ENCODE measurements at regions of chr4 and their contacts with region 1.

Region 1: GRCh38 chr4:121900132-121900983 is 30.1 kb upstream of the BBS7 start:
- DNase-seq: peak; percentile 12
- ATAC-seq: peak; percentile 93
- H3K4me3 ChIP-seq: no peak overlapping the region
- H3K27ac ChIP-seq: no peak overlapping the region
- H3K4me1 ChIP-seq: no peaks in the 10 kb centered on the region
- H3K27me3 ChIP-seq: no peaks in the 10 kb centered on the region
- CTCF ChIP-seq: peak; percentile 67 to 85 (median 84)
- EP300 ChIP-seq: no peak
- POLR2A ChIP-seq: no peak
- RAD21 ChIP-seq: peak; percentile 99

Region 2: DNA sequence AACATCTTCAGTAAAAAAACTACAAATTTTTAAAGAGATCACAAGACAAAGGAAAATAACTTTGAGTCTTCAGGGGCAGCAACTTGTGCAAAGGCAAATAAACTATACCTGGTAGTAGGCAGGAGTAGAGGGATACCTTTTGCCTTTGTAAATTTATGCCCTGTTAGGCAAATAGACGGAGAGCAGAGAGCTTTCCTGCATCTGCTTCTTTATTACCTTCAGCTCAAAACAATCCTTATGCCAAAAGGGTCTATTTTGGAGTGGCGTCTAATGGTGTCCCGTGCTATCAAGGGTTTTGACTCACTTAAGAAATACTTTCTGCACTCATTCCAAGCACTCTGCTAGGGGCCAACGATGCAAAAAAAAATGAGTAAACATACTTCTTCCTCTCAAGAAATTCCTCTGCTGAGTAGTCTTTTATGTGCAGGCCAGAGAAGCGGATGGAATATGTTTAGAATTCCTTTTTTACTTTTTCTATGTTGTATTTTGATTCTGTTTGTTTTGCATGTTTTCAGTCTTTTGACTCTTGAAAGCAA is 335.4 kb before region 1 on chr4:
- CTCF ChIA-PET with region 1: no interaction called
- POLR2A ChIA-PET with region 1: no interaction called
- RAD21 ChIA-PET with region 1: no interaction called
- SMC1A ChIA-PET with region 1: no interaction called
- in situ Hi-C with region 1: no loop called
- intact Hi-C with region 1: no loop called
- DNase-seq: no peak
- ATAC-seq: no peak
- H3K4me3 ChIP-seq: no peak overlapping the region
- H3K27ac ChIP-seq: no peak overlapping the region
- H3K4me1 ChIP-seq: no peaks in the 10 kb centered on the region
- H3K27me3 ChIP-seq: no peaks in the 10 kb centered on the region; a peak in 1 of 4 replicates
- CTCF ChIP-seq: no peak
- EP300 ChIP-seq: no peak
- POLR2A ChIP-seq: no peak
- RAD21 ChIP-seq: no peak

Region 3: DNA sequence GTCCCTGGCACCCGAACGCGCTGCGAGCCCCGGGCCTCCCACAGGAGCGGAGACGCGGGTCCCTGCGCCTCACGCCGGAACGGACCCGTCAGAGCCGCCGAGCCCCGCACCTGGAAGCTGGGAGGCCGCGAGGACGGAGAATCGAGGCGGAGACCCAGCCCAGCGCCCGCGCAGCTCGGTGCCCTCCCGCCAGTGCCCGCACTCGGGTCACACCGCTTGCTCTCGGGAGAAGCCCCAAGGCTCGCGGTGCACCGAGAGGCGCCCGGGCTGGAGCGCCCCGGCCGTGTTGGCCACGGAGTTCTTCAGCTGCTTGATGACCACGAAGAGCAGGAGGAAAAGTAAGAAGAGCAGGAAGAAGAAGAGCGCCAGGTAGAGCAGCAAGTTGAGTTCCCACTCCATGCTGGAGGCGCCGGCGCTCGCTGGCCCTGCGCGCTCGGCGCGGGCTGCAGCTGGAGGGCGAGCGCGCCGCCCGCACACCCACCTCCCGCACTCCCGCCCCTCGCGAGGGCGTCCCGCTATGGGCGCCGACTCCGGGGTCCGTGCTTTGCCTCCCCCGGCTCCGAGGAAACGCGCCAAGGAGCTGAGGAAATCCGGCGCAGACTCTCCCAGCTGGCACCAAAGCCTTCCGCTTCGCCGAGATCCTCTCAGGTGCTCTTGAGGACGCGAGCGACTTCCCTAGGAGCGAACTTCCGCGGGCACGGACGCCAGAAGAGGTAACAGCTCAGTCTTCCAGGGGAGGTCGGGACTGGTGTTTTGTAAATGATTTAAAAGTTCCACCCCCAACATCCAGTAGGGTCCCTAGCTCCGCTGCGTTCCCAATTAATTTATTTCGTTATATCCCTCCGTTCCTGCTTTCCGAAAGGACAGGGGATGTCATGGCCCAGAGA is 135.4 kb before region 1 on chr4 and contains the start of gene SMIM43:
- CTCF ChIA-PET with region 1: no interaction called
- POLR2A ChIA-PET with region 1: no interaction called
- RAD21 ChIA-PET with region 1: no interaction called
- SMC1A ChIA-PET with region 1: no interaction called
- in situ Hi-C with region 1: no loop called
- intact Hi-C with region 1: no loop called
- DNase-seq: no peak
- ATAC-seq: peak; percentile 42
- H3K4me3 ChIP-seq: peak within 1 kb of the TSS; percentile 2; the same call in 1 of the 2 replicates
- H3K27ac ChIP-seq: no peak within 1 kb of the TSS
- H3K4me1 ChIP-seq: no peaks in the 10 kb centered on the region
- H3K27me3 ChIP-seq: peaks cover 1 to 5% of the 10 kb centered on the region in 2 experiments; a peak in 3 of 4 replicates
- CTCF ChIP-seq: no peak
- EP300 ChIP-seq: no peak
- POLR2A ChIP-seq: no peak
- RAD21 ChIP-seq: no peak
- polyA plus RNA-seq, gene SMIM43: not detected

Region 4: GRCh38 chr4:121869841-121870656 is 30.3 kb before region 1 on chr4 and contains the start of gene BBS7:
- CTCF ChIA-PET with region 1: interaction called, 10 read pairs
- POLR2A ChIA-PET with region 1: no interaction called
- RAD21 ChIA-PET with region 1: interaction called, 8 read pairs
- SMC1A ChIA-PET with region 1: interaction called, 3 read pairs
- in situ Hi-C with region 1: no loop called
- intact Hi-C with region 1: no loop called
- DNase-seq: peak; percentile 81
- ATAC-seq: peak; percentile 99
- H3K4me3 ChIP-seq: peak within 1 kb of the TSS; percentile 83
- H3K27ac ChIP-seq: peak within 1 kb of the TSS; percentile 42; the same call in 1 of the 2 replicates
- H3K4me1 ChIP-seq: no peaks in the 10 kb centered on the region
- H3K27me3 ChIP-seq: no peaks in the 10 kb centered on the region
- CTCF ChIP-seq: no peak
- EP300 ChIP-seq: no peak
- POLR2A ChIP-seq: peak; percentile 88
- RAD21 ChIP-seq: no peak
- polyA plus RNA-seq, gene BBS7: 7.4 to 8.8 TPM

Region 5: GRCh38 chr4:121885115-121885514 is 15.2 kb before region 1 on chr4:
- CTCF ChIA-PET with region 1: interaction called, 15 read pairs
- POLR2A ChIA-PET with region 1: no interaction called
- RAD21 ChIA-PET with region 1: interaction called, 4 read pairs
- SMC1A ChIA-PET with region 1: interaction called, 3 read pairs
- in situ Hi-C with region 1: no loop called
- intact Hi-C with region 1: no loop called
- DNase-seq: no peak
- ATAC-seq: no peak
- H3K4me3 ChIP-seq: no peak overlapping the region
- H3K27ac ChIP-seq: no peak overlapping the region
- H3K4me1 ChIP-seq: no peaks in the 10 kb centered on the region
- H3K27me3 ChIP-seq: no peaks in the 10 kb centered on the region
- CTCF ChIP-seq: no peak
- EP300 ChIP-seq: no peak
- POLR2A ChIP-seq: no peak
- RAD21 ChIP-seq: no peak

Region 6: GRCh38 chr4:121943941-121944340 is 43.6 kb after region 1 on chr4:
- CTCF ChIA-PET with region 1: interaction called, 16 read pairs
- POLR2A ChIA-PET with region 1: no interaction called
- RAD21 ChIA-PET with region 1: no interaction called
- SMC1A ChIA-PET with region 1: interaction called, 8 read pairs
- in situ Hi-C with region 1: no loop called
- intact Hi-C with region 1: no loop called
- DNase-seq: no peak
- ATAC-seq: peak; percentile 92
- H3K4me3 ChIP-seq: no peak overlapping the region
- H3K27ac ChIP-seq: no peak overlapping the region
- H3K4me1 ChIP-seq: no peaks in the 10 kb centered on the region
- H3K27me3 ChIP-seq: peaks cover 0 to 6% of the 10 kb centered on the region in 2 experiments; a peak in 2 of 4 replicates
- CTCF ChIP-seq: peak; percentile 37 to 72 (median 64); a peak in 5 of 6 replicates
- EP300 ChIP-seq: no peak
- POLR2A ChIP-seq: no peak
- RAD21 ChIP-seq: 0 out of 2 replicates have a peak, but pooled peaks have one; percentile 16

Region 7: DNA sequence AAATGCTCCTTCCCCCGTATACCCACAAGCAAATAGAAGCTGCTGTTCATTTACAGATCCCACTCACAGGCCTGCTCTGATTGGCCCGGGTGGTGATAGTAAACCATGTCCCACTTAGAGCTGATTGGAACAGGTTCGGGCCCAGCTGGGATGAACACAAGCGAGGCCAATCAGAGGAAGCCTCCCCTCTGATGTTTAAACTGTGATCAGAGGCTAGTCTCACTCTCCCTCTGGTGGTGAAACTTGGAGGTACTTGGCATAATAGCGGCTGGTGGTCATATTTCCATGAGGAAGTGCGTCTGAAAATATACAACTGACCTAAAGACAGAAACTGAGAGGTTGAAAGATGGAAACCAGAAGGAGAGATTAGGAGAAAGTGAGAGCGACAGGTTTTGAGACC is 103.0 kb after region 1 on chr4:
- CTCF ChIA-PET with region 1: interaction called, 29 read pairs
- POLR2A ChIA-PET with region 1: no interaction called
- RAD21 ChIA-PET with region 1: interaction called, 23 read pairs
- SMC1A ChIA-PET with region 1: interaction called, 28 read pairs
- in situ Hi-C with region 1: loop called (anchors 5 kb)
- intact Hi-C with region 1: loop called (anchors 1 kb)
- DNase-seq: peak; percentile 11
- ATAC-seq: peak; percentile 97
- H3K4me3 ChIP-seq: no peak overlapping the region
- H3K27ac ChIP-seq: no peak overlapping the region
- H3K4me1 ChIP-seq: no peaks in the 10 kb centered on the region
- H3K27me3 ChIP-seq: no peaks in the 10 kb centered on the region
- CTCF ChIP-seq: peak; percentile 58 to 66 (median 58)
- EP300 ChIP-seq: no peak
- POLR2A ChIP-seq: no peak
- RAD21 ChIP-seq: peak; percentile 81

Region 8: DNA sequence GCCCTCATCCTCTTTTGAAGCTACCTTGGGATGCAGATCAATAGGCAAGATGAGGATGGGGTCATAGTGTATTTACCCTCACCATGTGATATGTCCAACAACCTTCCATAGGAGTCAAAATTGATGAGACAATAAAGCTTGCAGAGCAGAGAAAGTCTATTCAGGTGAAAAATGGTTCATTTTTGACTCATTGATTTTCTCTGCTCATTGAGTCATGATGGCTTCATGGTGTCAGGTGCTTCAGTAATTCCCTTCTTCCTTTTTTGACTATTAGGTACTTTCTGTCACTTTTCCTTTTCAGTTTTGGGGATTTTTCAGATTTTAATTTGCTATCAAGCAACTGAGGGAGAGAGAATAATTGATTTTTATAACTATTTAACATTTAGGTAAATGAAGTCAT is 612.1 kb after region 1 on chr4:
- CTCF ChIA-PET with region 1: no interaction called
- POLR2A ChIA-PET with region 1: interaction called, 10 read pairs
- RAD21 ChIA-PET with region 1: no interaction called
- SMC1A ChIA-PET with region 1: no interaction called
- in situ Hi-C with region 1: no loop called
- intact Hi-C with region 1: no loop called
- DNase-seq: no peak
- ATAC-seq: peak; percentile 31; the same call in 2 of the 3 replicates
- H3K4me3 ChIP-seq: no peak overlapping the region
- H3K27ac ChIP-seq: no peak overlapping the region
- H3K4me1 ChIP-seq: no peaks in the 10 kb centered on the region
- H3K27me3 ChIP-seq: no peaks in the 10 kb centered on the region; a peak in 1 of 4 replicates
- CTCF ChIP-seq: no peak
- EP300 ChIP-seq: no peak
- POLR2A ChIP-seq: no peak
- RAD21 ChIP-seq: no peak

Region 9: GRCh38 chr4:122584519-122584918 is 684.2 kb after region 1 on chr4:
- CTCF ChIA-PET with region 1: interaction called, 85 read pairs
- POLR2A ChIA-PET with region 1: no interaction called
- RAD21 ChIA-PET with region 1: no interaction called
- SMC1A ChIA-PET with region 1: interaction called, 45 read pairs
- in situ Hi-C with region 1: loop called (anchors 5 kb)
- intact Hi-C with region 1: no loop called
- DNase-seq: no peak
- ATAC-seq: no peak; the same call in 2 of the 3 replicates
- H3K4me3 ChIP-seq: no peak overlapping the region
- H3K27ac ChIP-seq: no peak overlapping the region
- H3K4me1 ChIP-seq: peaks cover 10% of the 10 kb centered on the region
- H3K27me3 ChIP-seq: no peaks in the 10 kb centered on the region; a peak in 1 of 4 replicates
- CTCF ChIP-seq: no peak
- EP300 ChIP-seq: no peak
- POLR2A ChIP-seq: no peak
- RAD21 ChIP-seq: no peak